Breast epithelium (tissue), 4 donors: ENCODE measurements at regions of chr22 and their contacts with region 1.

Region 1: DNA sequence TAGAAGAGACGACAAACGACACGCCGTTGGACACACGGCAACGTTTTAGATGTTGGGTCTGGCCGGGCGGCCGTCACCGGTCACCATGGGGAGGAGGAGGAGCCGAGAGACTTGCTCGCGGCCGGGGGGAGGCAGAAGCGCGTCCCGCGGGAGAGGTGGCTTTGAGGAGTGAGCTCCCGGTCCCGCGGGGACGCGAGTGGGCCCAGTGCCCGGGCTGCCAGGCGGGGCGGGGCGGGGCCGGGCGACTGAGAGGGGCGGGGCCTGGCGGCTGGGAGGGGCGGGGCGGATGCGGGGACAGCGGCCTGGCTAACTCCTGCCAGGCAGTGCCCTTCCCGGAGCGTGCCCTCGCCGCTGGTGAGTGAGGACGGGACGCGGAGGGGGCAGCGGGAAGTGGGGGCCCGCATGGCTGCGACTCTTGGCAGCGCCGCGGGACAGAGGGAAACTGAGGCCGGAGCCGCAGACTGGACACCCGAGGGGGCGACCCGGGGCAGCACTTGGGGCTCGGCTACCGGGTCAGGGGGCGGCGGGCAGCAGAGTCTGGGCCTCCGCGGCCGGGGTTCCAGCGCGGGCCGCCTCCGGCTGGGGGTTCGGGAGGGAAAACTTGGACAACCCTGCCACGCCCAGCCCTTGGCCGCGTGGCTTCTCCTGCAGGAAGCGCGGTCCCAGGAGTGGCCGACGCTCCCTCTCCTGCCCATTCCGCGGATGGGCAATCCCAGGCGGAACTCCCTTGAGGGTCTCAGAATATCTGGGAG is at the start of gene TSPO:
- DNase-seq: peak; percentile 62 to 78
- H3K4me3 ChIP-seq: peak within 1 kb of the TSS; percentile 88 to 93 (median 89)
- H3K27ac ChIP-seq: peak within 1 kb of the TSS; percentile 80 to 93
- H3K4me1 ChIP-seq: no peaks in the 10 kb centered on the region
- H3K27me3 ChIP-seq: no peaks in the 10 kb centered on the region
- CTCF ChIP-seq: no peak
- POLR2A ChIP-seq: no peak
- total RNA-seq, gene TSPO: 250 to 468 (median 284) TPM

Region 2: GRCh38 chr22:44363272-44363979 is 1212.0 kb after region 1 on chr22:
- intact Hi-C with region 1: loop called (anchors 10 kb)
- DNase-seq: peak in 1 of 2 donors; percentile 76
- H3K4me3 ChIP-seq: peak overlapping the region in 1 of 3 donors; percentile 51
- H3K27ac ChIP-seq: peak overlapping the region; percentile 33 to 81
- H3K4me1 ChIP-seq: peaks cover 12 to 15% of the 10 kb centered on the region in 2 donors
- H3K27me3 ChIP-seq: no peaks in the 10 kb centered on the region
- CTCF ChIP-seq: no peak
- POLR2A ChIP-seq: no peak